ENCODE measurements at regions of chr19 and their contacts with region 1.

Region 1: DNA sequence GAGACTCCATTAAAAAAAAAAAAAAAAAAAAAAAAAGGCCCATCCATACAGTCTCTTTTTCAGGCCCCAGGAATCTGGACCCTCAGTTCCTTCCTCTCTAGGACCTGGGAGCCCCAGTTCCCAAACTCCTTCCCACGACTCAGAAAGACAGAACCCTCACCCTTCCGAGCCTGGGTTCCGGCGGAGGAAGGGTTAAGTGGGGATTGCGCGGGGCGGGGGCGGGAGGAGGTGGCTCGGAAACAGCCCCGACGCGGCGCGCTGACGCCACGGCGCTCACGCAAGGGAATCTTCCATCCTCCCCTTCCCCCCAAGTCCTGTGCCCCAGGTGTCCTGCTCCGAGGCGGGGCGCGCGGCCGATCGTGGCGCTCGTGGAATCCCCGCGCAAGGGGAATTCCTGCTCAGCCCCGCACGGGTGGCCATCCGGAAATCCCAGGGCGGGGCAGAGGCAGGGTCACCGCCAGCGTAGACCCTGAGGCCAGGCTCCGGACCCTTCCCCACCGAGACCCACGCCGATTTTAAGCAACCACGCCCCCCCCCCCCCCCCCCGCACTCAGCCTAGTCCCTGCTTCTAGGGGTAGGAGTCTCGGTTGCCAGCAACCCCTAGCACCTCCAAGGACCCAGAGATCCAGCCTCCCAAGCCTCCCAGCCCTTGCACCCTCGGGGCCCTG is 659 bp downstream of the NFKBID start:
- DNase-seq: peak; percentile 33
- H3K4me3 ChIP-seq: peak overlapping the region; percentile 72
- CTCF ChIP-seq: no peak

Region 2: DNA sequence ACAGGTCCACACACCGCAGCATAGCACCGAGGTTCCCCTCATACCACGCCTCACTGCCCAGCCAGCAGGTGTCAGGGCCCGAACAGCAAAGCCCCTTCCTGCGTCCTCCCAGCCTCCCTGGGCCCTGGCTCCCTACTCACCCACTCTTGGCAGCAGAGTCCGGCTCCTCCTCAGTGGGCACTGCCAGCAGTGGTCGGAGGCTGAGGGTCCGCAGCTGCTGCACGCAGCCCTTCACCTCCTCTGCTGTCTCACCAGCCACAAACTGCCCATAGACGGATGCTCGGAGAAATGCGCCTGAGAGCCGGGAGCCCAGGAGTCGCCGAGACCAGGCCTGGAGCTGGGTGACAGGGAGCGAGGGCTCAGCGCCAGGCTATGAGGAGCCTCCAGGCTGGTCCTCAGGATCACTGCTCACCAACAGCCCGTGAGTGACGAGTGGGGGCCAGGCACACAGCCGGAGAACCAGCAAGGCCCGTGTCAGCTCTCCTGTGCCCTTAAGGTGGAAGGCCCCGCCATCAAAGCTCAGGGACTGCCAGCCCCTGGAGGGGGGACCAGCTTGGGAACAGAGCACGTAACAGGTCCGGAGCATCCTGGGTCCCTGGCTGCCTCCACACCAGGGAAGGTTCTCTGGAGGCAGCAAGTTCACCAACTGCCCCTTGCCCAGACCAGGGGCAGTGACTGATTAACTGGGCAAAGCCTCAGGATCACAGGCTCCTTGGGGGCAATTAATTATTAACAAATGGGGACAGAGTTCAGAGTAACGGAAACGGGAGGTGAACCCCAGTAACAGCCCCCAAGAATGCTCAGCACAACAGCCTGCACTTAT is 87.2 kb before region 1 on chr19 and contains the start of gene PRODH2:
- in situ Hi-C with region 1: no loop called
- DNase-seq: no peak
- H3K4me3 ChIP-seq: no peak within 1 kb of the TSS
- CTCF ChIP-seq: no peak

Region 3: DNA sequence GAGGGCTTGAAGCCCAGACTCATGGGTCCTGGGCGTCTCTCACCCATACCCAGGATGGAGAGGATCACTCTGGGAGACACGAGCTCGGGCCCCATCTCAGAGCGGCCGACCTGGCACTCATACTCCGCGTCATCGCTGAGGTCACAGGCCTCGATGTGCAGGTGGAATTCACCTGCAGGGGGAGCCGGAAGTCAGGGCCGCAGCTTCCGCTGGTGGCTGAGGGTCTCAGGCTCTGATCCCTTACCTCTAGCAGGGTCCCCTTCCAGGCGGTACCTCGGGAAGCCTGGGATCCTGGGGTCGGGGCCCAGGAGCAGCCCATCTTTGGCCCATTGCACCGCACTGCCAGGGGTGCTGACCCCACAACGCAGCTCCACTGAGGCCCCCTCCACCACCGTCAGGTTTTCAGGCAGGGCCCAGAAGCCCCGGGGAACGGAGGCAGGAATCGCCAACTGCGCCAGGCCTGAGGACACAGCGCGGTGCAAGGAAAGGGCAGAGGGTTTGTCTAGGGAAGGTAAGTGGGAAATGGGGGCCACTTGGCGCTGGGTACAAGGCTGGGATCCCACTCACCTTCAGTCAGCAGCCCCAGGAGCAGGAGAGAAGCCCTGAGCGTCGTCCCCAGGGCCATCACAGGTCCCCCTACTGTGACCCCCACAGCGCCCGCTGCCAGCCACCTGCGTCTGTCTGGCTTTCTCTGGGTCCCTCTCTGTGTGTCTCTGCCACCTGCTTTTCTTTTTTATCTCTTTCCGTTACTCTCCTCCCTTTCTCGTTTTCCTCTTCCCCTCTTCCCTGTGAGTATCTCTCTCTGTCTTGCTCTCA is 48.3 kb before region 1 on chr19:
- in situ Hi-C with region 1: loop called (anchors 5 kb)
- DNase-seq: no peak
- H3K4me3 ChIP-seq: no peak overlapping the region
- CTCF ChIP-seq: peak; percentile 23

Region 4: GRCh38 chr19:35931161-35931873 is 31.6 kb after region 1 on chr19:
- in situ Hi-C with region 1: no loop called
- DNase-seq: peak; percentile 99
- H3K4me3 ChIP-seq: peak overlapping the region; percentile 30
- CTCF ChIP-seq: peak; percentile 82

Region 5: GRCh38 chr19:35949131-35949530 is 49.5 kb after region 1 on chr19:
- in situ Hi-C with region 1: no loop called
- DNase-seq: no peak
- H3K4me3 ChIP-seq: no peak overlapping the region
- CTCF ChIP-seq: no peak

Region 6: GRCh38 chr19:35986664-35987570 is 87.2 kb after region 1 on chr19:
- in situ Hi-C with region 1: no loop called
- DNase-seq: no peak
- H3K4me3 ChIP-seq: peak overlapping the region; percentile 34
- CTCF ChIP-seq: no peak

Measured in astrocyte of the cerebellum (primary cell).